Head of caudate nucleus (tissue), 42 donors: ENCODE measurements at regions of chr1 and their contacts with region 1.

Region 1: GRCh38 chr1:17053685-17054410 is at the start of gene SDHB:
- DNase-seq: peak; percentile 97 to 100 (median 99)

Region 2: DNA sequence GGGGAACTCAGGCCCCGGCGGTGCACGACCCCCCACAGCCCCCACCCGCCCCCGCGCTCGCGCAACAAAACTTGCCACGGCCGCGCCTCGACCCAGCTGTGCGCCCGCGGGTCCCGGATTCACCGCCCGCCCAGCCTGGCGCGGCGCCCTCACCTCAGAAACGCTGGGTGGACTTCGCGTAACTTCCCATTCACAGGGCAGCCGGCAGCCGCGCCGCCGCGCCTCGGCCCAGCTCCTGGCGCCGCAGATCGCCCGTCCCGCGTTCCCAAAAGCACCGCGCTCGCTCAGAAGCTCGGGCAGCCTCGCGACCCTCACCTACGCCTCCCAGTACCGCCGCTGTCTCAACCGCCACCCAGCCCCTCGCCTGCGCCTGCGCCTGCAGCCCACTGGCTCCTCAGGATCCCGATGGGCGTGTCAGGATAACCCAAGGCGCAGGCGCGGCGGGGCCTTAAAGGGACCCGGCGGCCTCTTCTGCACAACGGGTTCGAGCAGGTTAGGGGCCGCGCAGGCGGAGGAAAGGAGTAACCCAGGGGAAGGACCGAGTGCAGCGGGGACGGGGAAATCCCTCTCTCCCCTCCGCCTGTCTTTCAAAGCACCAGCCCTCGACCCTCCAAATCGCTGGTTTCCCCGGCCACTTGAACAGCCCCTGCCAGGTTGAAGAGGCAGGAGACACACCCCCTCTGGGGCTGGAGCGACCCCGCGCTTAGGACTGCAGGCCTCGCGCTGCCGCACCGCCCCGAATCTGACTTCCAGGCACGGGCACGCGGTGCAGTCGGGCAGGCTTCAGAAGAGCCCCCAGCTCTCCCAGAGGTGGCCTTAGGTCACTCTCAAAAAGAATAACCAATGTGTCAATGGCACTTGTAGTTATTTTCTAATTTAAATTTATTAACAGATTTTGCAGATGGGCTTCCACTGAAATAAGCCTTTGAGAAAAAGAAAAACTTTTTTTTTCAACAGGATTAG is 440.4 kb before region 1 on chr1 and contains the start of gene NBPF1:
- intact Hi-C with region 1: no loop called
- DNase-seq: peak; percentile 96 to 100 (median 100)

Region 3: DNA sequence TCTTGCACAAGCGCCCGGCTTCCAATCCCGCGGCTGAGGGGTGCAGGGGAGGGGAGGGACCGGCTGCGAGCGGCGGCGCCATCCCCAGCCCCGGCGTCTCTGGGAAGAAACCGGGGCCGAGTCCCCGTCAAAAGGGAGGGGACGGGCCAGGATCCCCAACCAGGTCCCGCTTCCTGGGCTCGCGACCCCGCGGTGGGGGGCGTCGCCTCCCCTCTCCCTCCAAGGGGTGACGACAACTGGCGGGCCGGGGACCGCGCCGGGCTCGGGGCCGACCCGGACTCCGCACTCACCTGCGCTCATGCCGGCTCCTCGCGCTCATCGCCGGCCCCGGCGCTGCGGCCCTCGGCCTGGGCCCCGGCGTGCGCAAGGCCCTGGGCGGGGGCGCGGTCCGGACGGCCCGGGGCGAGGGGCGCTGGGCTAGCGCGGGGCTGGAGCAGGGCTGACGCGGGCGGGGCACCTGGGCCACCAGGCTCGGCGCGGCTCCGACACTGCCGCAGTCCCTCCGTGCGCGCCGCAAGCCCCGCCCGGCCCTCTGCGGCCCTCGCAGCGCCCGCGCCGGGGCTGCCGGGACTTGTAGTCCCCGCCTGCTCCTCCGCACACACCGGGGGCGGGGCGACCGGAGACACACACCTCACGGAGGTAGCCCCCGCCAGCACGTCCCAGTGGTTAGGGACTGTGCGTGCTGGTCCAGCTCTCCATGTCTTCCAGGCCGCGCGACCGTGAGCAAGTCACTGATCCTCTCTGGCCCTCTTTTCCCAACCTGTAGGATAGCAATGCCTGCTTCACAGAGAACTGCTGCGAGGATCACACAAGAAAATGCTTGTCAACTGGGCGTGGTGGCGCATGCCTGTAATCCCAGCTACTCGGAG is 42.2 kb before region 1 on chr1 and contains the start of gene ATP13A2:
- intact Hi-C with region 1: loop called (anchors 5 kb)
- DNase-seq: peak; percentile 63 to 95 (median 89)

Region 4: GRCh38 chr1:17419626-17420328 is 365.9 kb after region 1 on chr1:
- intact Hi-C with region 1: loop called (anchors 10 kb)
- DNase-seq: peak in 41 of 42 donors; percentile 35 to 88 (median 72)